ENCODE measurements at regions of chr16 and their contacts with region 1.

Region 1: DNA sequence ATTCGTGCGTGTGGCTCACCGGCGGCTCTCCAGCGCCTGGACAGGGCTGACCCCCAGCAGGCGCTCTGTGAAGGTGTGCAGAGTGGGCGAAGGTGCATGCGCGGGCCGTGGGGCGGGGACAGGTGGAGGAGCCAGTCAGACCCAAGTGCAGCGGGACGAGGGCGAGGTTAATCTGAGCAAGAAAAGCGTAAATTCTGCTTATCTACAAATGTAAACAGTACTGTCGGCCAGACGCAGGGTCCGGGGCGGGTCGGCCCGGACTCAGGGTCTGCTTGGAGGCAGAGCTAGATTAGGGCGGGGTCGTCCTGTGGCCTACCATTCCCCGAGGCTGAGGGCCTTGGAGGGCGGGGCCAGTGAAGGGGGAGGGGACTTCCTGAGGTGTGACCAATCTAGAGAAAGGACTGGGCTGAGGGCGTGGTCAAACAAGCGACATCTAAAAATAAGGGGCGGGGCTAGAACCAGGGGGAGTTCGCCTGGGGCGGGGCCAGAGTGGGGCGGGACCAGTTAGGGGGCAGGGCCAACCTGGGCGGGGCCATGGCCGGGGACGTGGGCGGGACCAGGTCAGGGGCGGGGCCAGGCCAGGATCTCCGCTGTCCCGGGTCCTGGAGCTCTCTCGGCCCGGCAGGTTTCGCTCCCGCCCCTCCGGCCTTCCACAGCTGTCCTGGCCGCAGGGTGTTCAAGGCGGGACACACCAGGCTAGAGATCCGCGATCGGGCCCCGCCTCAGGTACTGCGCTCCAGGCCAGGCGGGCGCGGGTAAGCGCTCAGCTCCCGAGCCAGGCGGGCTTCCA is at the start of gene SEC14L5:
- DNase-seq: peak; percentile 78 to 94
- ATAC-seq: peak; percentile 96 to 99 (median 98)
- H3K4me3 ChIP-seq: peak within 1 kb of the TSS; percentile 25
- H3K4me3 Mint-ChIP-seq: peak within 1 kb of the TSS; percentile 87
- H3K27ac ChIP-seq: no peak within 1 kb of the TSS
- H3K27ac Mint-ChIP-seq: peak within 1 kb of the TSS in 1 of 2 donors; percentile 19
- H3K4me1 ChIP-seq: peaks cover 19% of the 10 kb centered on the region
- H3K4me1 Mint-ChIP-seq: peaks cover 13 to 16% of the 10 kb centered on the region in 2 donors
- H3K27me3 ChIP-seq: peaks cover 17% of the 10 kb centered on the region
- H3K27me3 Mint-ChIP-seq: peaks cover 9 to 29% of the 10 kb centered on the region in 2 donors
- CTCF ChIP-seq: no peak
- total RNA-seq, gene SEC14L5: 0.27 to 1.1 (median 0.93) TPM

Region 2: GRCh38 chr16:4766874-4767628 is 190.9 kb before region 1 on chr16 and contains the start of gene ZNF500:
- intact Hi-C with region 1: loop called (anchors 1 kb)
- DNase-seq: peak; percentile 95 to 96
- ATAC-seq: peak; percentile 93 to 97 (median 97)
- H3K4me3 ChIP-seq: peak within 1 kb of the TSS; percentile 69
- H3K4me3 Mint-ChIP-seq: peak within 1 kb of the TSS; percentile 92
- H3K27ac ChIP-seq: peak within 1 kb of the TSS; percentile 73
- H3K27ac Mint-ChIP-seq: peak within 1 kb of the TSS; percentile 86 to 88
- H3K4me1 ChIP-seq: peaks cover 38% of the 10 kb centered on the region
- H3K4me1 Mint-ChIP-seq: peaks cover 30 to 34% of the 10 kb centered on the region in 2 donors
- H3K27me3 ChIP-seq: no peaks in the 10 kb centered on the region
- H3K27me3 Mint-ChIP-seq: no peaks in the 10 kb centered on the region
- CTCF ChIP-seq: no peak
- total RNA-seq, gene ZNF500: 11.4 to 20.3 (median 13.0) TPM

Measured in natural killer cell (primary cell).